HepG2 (cell line): ENCODE measurements at regions of chr4 and their contacts with region 1.

Region 1: DNA sequence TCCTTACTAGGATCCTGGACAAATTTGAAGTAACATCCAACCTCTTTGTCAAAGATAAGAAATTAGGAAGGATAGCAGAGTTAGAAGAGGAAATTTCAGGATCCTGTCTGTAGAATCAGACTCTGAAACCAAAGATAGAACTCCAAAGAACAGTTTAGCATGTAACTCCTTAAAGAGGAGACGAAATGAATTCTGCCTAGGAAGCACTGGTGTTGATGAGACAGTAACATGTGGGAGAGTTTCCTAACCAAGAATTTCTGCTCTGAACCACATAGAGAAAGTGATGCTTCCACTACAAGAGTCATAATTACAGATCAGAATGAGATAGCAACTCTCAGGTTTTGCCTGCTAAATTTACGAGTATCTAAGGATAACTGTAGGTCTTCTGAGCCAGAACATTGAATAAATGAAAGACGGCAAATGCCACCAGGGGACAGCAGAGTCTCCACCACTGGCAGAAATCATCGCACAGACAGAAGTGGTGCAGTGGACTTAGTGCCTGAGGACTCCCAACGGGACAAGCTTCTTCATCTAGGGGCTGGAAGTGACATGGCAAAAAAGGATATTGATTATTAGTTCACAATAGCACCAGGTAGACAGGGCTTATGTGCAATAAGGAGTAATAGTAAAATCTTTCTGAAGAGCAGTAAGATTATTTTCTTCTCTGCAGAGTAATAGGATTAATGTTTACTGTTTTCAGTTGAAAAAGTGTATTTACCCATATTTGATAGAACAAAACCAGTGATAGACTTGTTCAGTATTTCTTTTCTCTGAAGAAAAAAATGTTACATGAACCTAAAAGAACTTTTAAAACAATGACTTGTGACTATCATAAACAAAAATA is 6.7 kb upstream of the PPID start:
- DNase-seq: peak; percentile 67
- ATAC-seq: peak; percentile 99
- H3K4me3 ChIP-seq: peak overlapping the region in 2 of 3 experiments; percentile 13 to 14; a peak in 2 of 6 replicates
- H3K27ac ChIP-seq: no peak overlapping the region
- H3K4me1 ChIP-seq: peaks cover 21% of the 10 kb centered on the region
- H3K27me3 ChIP-seq: no peaks in the 10 kb centered on the region; a peak in 1 of 5 replicates
- CTCF ChIP-seq: peak; percentile 93
- EP300 ChIP-seq: no peak
- POLR2A ChIP-seq: no peak
- RAD21 ChIP-seq: peak; percentile 90

Region 2: DNA sequence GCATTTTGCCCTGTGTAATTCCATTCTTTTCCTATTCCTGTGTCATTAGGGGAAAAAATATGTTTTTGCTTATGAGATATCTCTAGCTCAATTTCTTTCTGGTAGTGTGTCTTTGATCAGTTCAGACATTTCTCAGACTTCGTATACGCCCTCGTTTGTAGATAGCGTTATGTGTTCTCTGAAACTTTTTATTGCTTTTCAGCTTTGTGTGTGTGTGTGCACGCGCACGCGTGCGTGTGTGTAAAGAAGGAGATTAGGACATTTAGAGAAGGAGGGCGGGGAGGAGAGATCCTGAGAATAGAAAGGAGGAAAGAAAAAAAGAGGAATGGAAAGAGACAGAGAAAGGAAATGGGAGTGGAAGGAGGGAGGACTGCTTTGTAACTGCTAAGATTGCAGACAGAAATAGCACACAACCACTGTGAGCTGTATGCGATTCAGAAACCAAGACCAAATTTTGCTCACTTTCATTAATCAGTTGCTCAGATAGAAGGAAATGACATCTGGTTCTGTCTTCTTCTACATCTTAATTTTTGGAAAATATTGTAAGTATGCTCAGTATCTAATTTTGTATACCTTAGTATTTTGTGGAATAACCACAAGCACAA is 208.4 kb before region 1 on chr4 and contains the start of gene RXFP1:
- CTCF ChIA-PET with region 1: no interaction called
- POLR2A ChIA-PET with region 1: no interaction called
- in situ Hi-C with region 1: no loop called
- intact Hi-C with region 1: no loop called
- DNase-seq: no peak
- ATAC-seq: no peak
- H3K4me3 ChIP-seq: no peak within 1 kb of the TSS
- H3K27ac ChIP-seq: no peak within 1 kb of the TSS
- H3K4me1 ChIP-seq: no peaks in the 10 kb centered on the region
- H3K27me3 ChIP-seq: 0 out of 5 replicates have a peak, but pooled peaks cover 0 to 2% of the 10 kb centered on the region in 2 experiments
- CTCF ChIP-seq: no peak
- EP300 ChIP-seq: no peak
- POLR2A ChIP-seq: no peak
- RAD21 ChIP-seq: no peak
- total RNA-seq, gene RXFP1: not detected in 2 replicates

Region 3: DNA sequence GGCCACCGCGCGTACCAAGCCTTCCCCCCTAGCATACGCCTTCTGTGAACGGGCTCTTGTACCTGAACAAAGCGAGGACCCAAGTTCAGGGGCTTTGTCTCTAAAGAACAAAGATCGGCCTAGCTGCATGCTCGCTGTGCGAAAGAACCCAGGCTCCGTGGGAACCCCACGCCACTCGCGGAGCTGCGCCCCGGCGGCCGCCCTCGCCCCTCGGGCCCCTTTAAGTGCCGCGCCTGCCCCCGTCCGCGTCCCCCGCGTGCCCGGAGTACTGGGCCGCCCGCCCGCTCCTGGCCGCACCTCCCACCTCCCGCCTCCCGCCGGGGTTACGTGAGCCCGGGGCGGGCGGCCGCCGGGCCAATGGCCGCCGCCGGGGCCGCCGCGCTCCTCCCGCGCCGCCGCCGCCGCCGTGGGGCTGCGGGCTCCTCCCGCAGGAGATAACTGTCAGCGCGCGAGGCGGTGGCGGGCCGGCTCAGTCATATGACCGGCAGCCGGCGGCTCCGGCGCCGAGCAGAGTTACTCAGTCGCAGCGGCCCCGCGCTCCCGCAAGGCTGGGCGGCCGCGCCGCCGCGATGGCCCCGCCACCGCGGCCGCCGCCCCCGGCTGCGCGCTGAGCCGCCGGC is 38.7 kb after region 1 on chr4 and contains the start of gene FNIP2:
- CTCF ChIA-PET with region 1: no interaction called
- POLR2A ChIA-PET with region 1: no interaction called
- in situ Hi-C with region 1: no loop called
- intact Hi-C with region 1: loop called (anchors 1 kb)
- DNase-seq: peak; percentile 56
- ATAC-seq: peak; percentile 96
- H3K4me3 ChIP-seq: peak within 1 kb of the TSS; percentile 91 to 99 (median 92)
- H3K27ac ChIP-seq: peak within 1 kb of the TSS; percentile 92
- H3K4me1 ChIP-seq: peaks cover 54% of the 10 kb centered on the region
- H3K27me3 ChIP-seq: no peaks in the 10 kb centered on the region; a peak in 1 of 5 replicates
- CTCF ChIP-seq: no peak; the same call in 1 of the 2 replicates
- EP300 ChIP-seq: no peak
- POLR2A ChIP-seq: peak; percentile 75 to 91
- RAD21 ChIP-seq: no peak; the same call in 1 of the 2 replicates
- total RNA-seq, gene FNIP2: 15.5 and 21.8 TPM in 2 replicates

Region 4: GRCh38 chr4:158850800-158851644 is 121.1 kb after region 1 on chr4:
- CTCF ChIA-PET with region 1: interaction called, 30 read pairs
- POLR2A ChIA-PET with region 1: no interaction called
- in situ Hi-C with region 1: loop called (anchors 5 kb)
- intact Hi-C with region 1: loop called (anchors 1 kb)
- DNase-seq: no peak
- ATAC-seq: no peak; the same call in 2 of the 3 replicates
- H3K4me3 ChIP-seq: no peak overlapping the region
- H3K27ac ChIP-seq: no peak overlapping the region
- H3K4me1 ChIP-seq: peaks cover 3% of the 10 kb centered on the region; the same call in 1 of the 2 replicates
- H3K27me3 ChIP-seq: no peaks in the 10 kb centered on the region
- CTCF ChIP-seq: peak; percentile 47
- EP300 ChIP-seq: no peak
- POLR2A ChIP-seq: no peak
- RAD21 ChIP-seq: no peak

Region 5: DNA sequence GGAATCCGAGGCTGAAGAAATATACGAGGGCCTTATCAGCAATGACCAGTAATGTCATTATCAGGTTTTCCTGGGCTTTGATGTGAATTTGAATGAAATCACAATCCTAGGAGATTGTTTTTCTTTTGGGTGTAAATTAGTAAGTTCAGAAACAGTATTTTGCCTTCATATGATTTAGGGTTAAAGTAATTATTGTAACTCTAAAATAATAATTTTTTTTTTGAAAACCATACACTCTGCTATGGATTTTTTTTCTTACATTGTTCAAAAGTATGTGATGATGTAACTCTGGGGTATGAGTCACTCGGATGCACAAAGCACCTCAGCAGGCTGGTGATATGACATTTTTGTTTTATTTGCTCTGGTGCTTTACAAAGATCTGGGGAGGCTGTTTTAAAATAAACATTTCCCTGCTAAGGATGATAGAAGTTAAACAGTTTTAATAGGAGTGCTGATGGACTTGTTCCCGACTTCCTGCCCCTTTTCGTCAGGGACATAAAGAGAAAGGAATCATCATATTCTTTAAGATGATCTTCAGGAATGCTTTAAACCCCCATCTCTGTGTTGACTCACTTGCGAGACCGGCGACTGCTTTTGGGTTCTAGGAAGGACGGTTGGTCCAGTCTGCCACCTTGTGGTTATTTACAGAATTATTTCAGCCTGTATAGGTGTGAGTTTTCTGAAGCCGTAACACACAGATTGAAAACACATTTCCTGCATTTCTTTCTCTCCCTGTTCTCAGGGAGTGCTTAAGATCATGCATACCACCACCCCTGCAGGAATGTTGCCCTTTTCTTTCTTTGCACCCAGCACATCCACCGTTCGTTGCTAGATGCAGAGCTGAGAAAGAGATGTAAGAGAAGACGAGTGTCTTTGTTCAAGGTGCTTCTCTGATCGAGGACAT is 445.4 kb after region 1 on chr4:
- CTCF ChIA-PET with region 1: interaction called, 5 read pairs
- POLR2A ChIA-PET with region 1: no interaction called
- in situ Hi-C with region 1: loop called (anchors 10 kb)
- intact Hi-C with region 1: loop called (anchors 1 kb)
- DNase-seq: peak; percentile 77
- ATAC-seq: peak; percentile 93
- H3K4me3 ChIP-seq: peak overlapping the region in 1 of 3 experiments; percentile 20; a peak in 1 of 6 replicates
- H3K27ac ChIP-seq: no peak overlapping the region
- H3K4me1 ChIP-seq: peaks cover 41% of the 10 kb centered on the region
- H3K27me3 ChIP-seq: no peaks in the 10 kb centered on the region
- CTCF ChIP-seq: peak; percentile 85
- EP300 ChIP-seq: no peak
- POLR2A ChIP-seq: no peak
- RAD21 ChIP-seq: peak; percentile 76

Region 6: DNA sequence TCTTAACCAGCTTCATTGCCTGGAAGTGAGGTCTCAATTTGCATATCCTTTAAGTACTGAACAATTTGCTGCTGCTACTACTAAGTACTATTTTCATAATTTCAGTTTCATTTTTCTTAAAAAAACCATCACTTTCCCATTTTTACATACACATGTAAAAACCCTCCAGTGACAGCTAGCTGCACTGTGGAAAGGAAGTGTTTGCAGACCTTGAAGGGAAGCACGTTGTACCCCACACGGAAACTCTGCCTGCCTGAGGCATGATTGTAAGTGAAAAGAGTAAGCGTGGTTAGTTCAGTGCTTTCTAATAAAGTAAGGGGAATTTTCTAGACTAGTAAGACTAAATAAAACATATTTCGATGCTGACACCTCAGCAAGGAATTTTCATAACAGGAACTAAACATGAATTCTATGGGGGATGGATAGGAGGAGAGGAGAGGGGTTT is 476.5 kb after region 1 on chr4:
- CTCF ChIA-PET with region 1: interaction called, 6 read pairs
- POLR2A ChIA-PET with region 1: no interaction called
- in situ Hi-C with region 1: loop called (anchors 10 kb)
- intact Hi-C with region 1: loop called (anchors 1 kb)
- DNase-seq: no peak
- ATAC-seq: no peak
- H3K4me3 ChIP-seq: no peak overlapping the region
- H3K27ac ChIP-seq: no peak overlapping the region
- H3K4me1 ChIP-seq: peaks cover 13% of the 10 kb centered on the region
- H3K27me3 ChIP-seq: no peaks in the 10 kb centered on the region
- CTCF ChIP-seq: no peak
- EP300 ChIP-seq: no peak
- POLR2A ChIP-seq: no peak
- RAD21 ChIP-seq: no peak